CD4-positive, alpha-beta T cell (primary cell): ENCODE measurements at regions of chr4 and their contacts with region 1.

Region 1: GRCh38 chr4:55742655-55743202 is 76.9 kb upstream of the EXOC1L start:
- DNase-seq: no peak
- ATAC-seq: no peak
- H3K4me3 ChIP-seq: no peak overlapping the region
- H3K4me3 Mint-ChIP-seq: no peak overlapping the region
- H3K27ac ChIP-seq: no peak overlapping the region
- H3K27ac Mint-ChIP-seq: no peak overlapping the region
- H3K4me1 ChIP-seq: no peaks in the 10 kb centered on the region
- H3K4me1 Mint-ChIP-seq: no peaks in the 10 kb centered on the region
- H3K27me3 ChIP-seq: no peaks in the 10 kb centered on the region
- H3K27me3 Mint-ChIP-seq: peaks cover 37% of the 10 kb centered on the region
- CTCF ChIP-seq: no peak

Region 2: DNA sequence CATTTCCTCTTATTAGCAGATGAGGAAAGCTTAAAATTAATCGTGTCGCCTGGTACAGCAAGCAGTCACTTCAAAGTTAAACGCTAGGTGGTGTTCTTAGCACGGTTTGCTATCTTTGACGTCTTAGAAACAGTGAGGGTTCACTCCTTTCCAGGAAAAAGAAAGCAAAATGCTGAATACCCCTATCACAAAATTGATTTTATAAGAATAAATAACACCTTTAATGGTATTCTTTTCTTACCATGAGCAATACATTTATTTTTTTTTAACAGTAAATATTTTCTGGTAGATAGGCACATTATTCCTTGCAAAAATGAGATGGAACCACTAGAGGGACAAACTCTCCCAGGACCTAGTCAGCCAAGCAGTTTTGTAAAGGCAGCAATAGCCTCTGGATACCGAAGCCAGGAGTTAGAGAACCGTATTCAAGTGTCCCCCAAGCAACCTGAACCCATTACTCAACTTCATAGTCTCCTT is 771.2 kb before region 1 on chr4:
- CTCF ChIA-PET with region 1: no interaction called
- POLR2A ChIA-PET with region 1: no interaction called
- intact Hi-C with region 1: loop called in 1 of 2 experiments (anchors 5 kb)
- DNase-seq: peak in 3 of 14 experiments; percentile 21 to 47 (median 34)
- ATAC-seq: peak; percentile 56
- H3K4me3 ChIP-seq: no peak overlapping the region
- H3K4me3 Mint-ChIP-seq: no peak overlapping the region
- H3K27ac ChIP-seq: no peak overlapping the region
- H3K27ac Mint-ChIP-seq: no peak overlapping the region
- H3K4me1 ChIP-seq: no peaks in the 10 kb centered on the region
- H3K4me1 Mint-ChIP-seq: no peaks in the 10 kb centered on the region
- H3K27me3 ChIP-seq: no peaks in the 10 kb centered on the region
- H3K27me3 Mint-ChIP-seq: peaks cover under 1% of the 10 kb centered on the region
- CTCF ChIP-seq: peak; percentile 30

Region 3: DNA sequence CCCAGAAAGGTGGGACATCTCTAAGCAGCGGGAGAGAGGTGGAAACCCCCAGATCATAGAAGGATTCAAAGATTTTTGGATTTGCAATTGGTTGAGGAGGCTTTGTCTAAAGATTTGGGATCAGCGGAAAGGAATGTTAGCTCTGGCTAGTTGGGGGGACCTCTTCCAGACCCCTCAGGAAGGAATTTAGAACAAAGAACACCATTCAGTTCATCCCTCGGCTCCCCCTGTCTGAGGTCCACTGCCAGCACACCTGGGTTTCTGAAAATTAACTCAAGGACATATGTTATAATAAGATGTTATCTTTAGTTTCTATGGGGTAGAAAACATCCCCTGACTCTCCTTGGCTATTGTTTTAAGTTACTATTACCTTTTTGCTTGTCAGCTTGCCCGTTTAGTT is 369.6 kb after region 1 on chr4:
- CTCF ChIA-PET with region 1: no interaction called
- POLR2A ChIA-PET with region 1: no interaction called
- intact Hi-C with region 1: no loop called
- DNase-seq: no peak
- ATAC-seq: no peak
- H3K4me3 ChIP-seq: no peak overlapping the region
- H3K4me3 Mint-ChIP-seq: no peak overlapping the region
- H3K27ac ChIP-seq: no peak overlapping the region
- H3K27ac Mint-ChIP-seq: no peak overlapping the region
- H3K4me1 ChIP-seq: no peaks in the 10 kb centered on the region
- H3K4me1 Mint-ChIP-seq: peaks cover 4% of the 10 kb centered on the region
- H3K27me3 ChIP-seq: peaks cover 0 to 2% of the 10 kb centered on the region in 2 experiments
- H3K27me3 Mint-ChIP-seq: no peaks in the 10 kb centered on the region
- CTCF ChIP-seq: no peak